GM23248 (cell line): ENCODE measurements at regions of chr16 and their contacts with region 1.

Region 1: GRCh38 chr16:75108792-75109734 is 7.5 kb downstream of the LDHD start:
- DNase-seq: peak; percentile 94
- H3K4me3 ChIP-seq: no peak overlapping the region
- H3K27ac ChIP-seq: peak overlapping the region; percentile 39
- H3K4me1 ChIP-seq: peaks cover 30% of the 10 kb centered on the region
- H3K27me3 ChIP-seq: no peaks in the 10 kb centered on the region

Region 2: DNA sequence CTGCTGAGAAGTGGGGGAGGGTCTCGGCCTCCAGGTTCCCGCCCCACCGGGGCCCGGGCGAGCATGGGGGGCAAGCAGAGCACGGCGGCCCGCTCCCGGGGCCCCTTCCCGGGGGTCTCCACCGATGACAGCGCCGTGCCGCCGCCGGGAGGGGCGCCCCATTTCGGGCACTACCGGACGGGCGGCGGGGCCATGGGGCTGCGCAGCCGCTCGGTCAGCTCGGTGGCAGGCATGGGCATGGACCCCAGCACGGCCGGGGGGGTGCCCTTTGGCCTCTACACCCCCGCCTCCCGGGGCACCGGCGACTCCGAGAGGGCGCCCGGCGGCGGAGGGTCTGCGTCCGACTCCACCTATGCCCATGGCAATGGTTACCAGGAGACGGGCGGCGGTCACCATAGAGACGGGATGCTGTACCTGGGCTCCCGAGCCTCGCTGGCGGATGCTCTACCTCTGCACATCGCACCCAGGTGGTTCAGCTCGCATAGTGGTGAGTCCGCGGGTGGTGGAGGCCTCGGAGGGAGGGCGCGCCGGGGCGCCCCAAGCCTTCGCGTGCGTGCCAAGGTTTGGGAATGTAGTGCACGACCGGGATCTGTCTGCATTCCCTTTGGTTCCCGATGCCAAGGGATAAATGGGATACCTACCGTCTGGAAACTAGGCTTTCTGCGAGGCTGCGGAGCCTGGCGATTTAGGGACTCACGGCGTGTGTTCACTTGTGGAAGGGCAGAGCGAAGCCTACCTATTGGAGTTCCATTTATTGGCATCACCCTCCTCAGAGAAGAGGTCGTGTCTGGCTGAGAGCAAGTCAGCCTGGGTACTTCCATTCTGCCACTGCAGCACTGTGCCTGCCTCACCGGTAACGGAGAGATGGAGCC is 109.2 kb before region 1 on chr16:
- in situ Hi-C with region 1: loop called (anchors 5 kb)
- DNase-seq: peak; percentile 67
- H3K4me3 ChIP-seq: peak overlapping the region; percentile 75
- H3K27ac ChIP-seq: no peak overlapping the region
- H3K4me1 ChIP-seq: peaks cover 18% of the 10 kb centered on the region
- H3K27me3 ChIP-seq: no peaks in the 10 kb centered on the region